Body of pancreas (tissue), 4 donors: ENCODE measurements at regions of chr12 and their contacts with region 1.

Region 1: DNA sequence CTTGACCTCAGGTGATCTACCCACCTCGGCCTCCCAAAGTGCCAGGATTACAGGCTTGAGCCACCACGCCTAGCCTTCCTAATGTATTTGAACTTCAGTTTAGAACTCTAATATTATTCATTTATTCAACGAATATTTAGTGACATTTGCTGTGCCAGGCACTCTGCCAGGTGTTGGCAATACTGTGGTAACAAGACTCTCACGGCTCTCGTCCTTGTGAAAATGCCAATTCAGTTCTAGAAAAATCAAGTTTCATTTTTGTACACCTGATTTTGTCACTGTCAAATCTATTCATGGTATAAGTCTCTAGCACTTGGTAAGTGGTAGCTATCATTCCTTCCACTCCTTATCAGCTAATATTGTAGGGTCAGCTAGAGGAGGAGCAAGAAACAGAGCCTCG is 6.3 kb upstream of the PWP1 start:
- DNase-seq: no peak
- ATAC-seq: no peak
- H3K4me3 ChIP-seq: no peak overlapping the region
- H3K27ac ChIP-seq: no peak overlapping the region
- H3K4me1 ChIP-seq: no peaks in the 10 kb centered on the region
- H3K27me3 ChIP-seq: no peaks in the 10 kb centered on the region
- CTCF ChIP-seq: no peak
- POLR2A ChIP-seq: no peak

Region 2: DNA sequence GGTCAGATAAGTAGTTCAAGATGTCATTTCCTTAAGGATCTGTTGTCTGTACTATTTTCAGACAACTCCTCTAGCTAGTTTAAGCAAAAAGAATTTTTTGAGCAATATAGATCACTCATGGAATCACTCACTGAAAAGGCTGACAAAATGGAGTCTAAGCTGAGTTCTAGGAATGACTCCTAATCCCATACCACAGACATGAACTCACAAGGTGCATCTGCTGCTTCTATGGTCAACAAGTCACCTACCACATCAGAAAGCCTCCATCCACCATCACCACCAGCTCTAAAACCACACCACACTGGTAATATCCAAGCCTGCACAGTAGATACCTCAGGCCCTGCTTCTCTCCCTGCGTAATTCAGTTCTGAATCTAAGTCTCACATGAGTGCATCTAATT is 39.3 kb after region 1 on chr12:
- intact Hi-C with region 1: no loop called
- DNase-seq: no peak
- ATAC-seq: no peak
- H3K4me3 ChIP-seq: no peak overlapping the region
- H3K27ac ChIP-seq: no peak overlapping the region
- H3K4me1 ChIP-seq: no peaks in the 10 kb centered on the region
- H3K27me3 ChIP-seq: no peaks in the 10 kb centered on the region
- CTCF ChIP-seq: no peak
- POLR2A ChIP-seq: no peak

Region 3: DNA sequence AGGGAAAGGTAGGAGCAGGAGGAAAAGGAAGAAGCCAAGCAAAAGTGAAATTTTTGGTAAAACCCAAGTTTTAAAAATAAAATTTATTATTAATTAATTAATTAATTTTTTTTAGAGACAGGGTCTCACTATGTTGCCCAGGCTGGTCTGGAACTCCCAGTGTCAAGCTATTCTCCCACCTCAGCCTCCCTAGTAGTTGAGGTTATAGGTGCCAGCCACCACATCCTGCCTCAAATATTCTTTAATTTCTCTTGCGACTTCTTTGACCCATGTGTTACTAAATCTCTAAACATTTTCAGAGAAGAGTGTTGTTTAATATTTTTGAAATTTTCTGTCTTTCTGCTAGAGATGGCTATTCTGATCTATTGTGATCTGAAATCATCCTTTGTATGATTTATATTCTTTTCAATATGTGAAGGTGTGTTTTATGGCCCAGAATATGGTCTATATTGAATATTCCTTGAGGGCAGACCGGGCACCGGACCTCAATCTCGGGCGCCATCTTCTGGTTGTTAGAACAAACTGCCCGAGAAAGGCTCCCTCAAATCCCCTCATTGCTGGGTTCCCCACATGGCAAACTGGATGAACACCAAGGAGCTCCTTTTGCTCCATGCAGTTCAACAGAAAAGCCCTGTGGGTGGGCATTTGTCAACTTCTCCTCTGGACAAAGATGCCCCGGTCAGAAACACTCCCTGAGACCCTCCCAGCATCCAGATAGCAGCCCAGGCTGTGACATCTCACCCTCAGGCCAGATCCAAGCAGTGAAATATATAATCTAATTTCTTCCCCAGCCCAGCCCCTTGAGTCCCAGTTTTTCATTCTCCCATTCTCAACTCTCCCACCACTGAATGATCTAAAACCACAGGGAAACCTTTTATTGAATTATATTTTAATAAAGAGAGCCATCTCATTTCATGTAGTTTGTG is 205.7 kb after region 1 on chr12:
- intact Hi-C with region 1: loop called (anchors 5 kb)
- DNase-seq: peak; percentile 46 to 63 (median 56)
- ATAC-seq: no peak
- H3K4me3 ChIP-seq: no peak overlapping the region
- H3K27ac ChIP-seq: no peak overlapping the region
- H3K4me1 ChIP-seq: no peaks in the 10 kb centered on the region
- H3K27me3 ChIP-seq: no peaks in the 10 kb centered on the region
- CTCF ChIP-seq: peak; percentile 19 to 67 (median 58)
- POLR2A ChIP-seq: no peak

Region 4: DNA sequence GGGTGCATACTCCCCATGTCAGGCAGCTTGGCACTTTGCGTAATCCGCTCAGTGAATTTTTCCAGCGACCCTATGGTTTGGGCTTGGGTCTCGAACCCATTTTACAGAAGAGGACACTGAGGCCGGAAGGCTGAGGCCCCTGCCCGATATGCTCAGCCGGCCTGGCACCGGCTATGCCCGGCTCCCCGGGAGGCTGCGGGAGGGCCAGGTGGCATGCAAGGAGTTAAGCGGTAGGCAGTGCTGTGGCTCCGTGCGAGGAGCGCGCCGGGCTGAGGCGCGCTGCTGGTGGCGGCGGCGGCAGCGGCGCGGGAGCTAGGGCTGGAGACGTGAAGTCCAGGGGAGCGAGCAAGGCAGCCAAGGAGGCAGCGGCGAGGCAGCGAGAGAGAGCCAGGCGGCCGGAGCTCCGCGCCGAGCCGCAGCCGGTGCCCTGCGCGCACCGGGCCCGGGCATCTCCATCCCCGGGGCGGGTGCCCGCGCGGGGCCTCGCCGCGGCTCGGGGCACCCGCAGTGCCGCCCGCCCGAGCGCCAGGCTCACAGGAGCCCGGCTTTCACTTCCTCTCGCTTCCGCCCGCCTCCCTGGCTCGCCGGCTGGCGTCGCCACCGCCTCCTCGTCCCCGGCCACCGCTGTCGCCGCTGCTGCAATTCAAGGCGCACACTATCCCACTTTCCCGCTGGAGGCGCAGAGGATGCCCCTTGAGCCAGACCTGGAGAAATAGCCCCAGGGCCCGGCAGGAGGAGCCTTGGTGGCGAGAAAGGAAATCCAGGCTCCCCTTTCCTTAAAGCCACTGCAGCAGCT is 449.9 kb after region 1 on chr12 and contains the start of gene WSCD2:
- intact Hi-C with region 1: no loop called
- DNase-seq: peak; percentile 15 to 41 (median 18)
- ATAC-seq: peak; percentile 38
- H3K4me3 ChIP-seq: no peak within 1 kb of the TSS
- H3K27ac ChIP-seq: no peak within 1 kb of the TSS
- H3K4me1 ChIP-seq: peaks cover 14% of the 10 kb centered on the region
- H3K27me3 ChIP-seq: peaks cover 0 to 25% of the 10 kb centered on the region in 2 donors
- CTCF ChIP-seq: peak in 1 of 7 experiments; percentile 12
- POLR2A ChIP-seq: no peak
- total RNA-seq, gene WSCD2: 0.26 to 1.3 TPM

Region 5: DNA sequence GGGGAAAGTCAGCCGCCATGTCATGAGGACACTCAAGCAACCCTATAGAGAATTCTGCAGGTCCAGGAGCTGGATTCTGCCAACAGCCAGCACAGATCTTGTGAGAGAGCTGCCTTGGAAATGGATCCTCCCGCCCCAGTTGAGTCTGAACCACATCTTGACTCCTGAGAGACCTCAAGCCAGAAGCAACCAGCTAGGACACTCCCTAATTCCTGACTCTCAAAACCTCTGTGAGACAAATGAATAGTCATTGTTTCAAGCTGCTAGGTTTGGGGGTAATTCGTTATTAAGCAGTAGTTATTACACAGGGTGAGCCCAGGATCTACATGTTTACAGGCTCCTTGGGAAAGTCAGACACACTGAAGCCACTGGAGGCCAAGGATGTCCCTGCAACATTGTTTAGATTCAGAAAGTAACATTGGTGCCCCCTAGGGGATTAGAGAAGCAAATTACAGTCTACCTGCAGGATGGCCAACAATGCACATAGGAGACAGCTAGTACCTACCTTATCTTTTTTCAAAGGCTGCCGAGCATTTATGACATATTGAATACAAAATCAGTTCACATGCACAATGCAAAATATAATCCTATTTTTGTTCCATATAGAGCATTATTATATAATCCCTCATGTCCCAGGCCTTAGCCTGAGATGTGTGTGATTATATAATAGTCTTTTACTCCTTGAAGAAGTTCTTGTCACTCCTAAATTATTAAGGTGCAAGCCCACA is 777.8 kb after region 1 on chr12:
- intact Hi-C with region 1: no loop called
- DNase-seq: peak in 3 of 4 donors; percentile 9 to 34 (median 20)
- ATAC-seq: peak; percentile 47
- H3K4me3 ChIP-seq: no peak overlapping the region
- H3K27ac ChIP-seq: no peak overlapping the region
- H3K4me1 ChIP-seq: no peaks in the 10 kb centered on the region
- H3K27me3 ChIP-seq: no peaks in the 10 kb centered on the region
- CTCF ChIP-seq: peak in 6 of 7 experiments; percentile 34 to 54 (median 48)
- POLR2A ChIP-seq: no peak